ENCODE measurements at regions of chr16 and their contacts with region 1.

Region 1: GRCh38 chr16:81394966-81395651 is 49.5 kb upstream of the CMIP start:
- DNase-seq: no peak

Region 2: DNA sequence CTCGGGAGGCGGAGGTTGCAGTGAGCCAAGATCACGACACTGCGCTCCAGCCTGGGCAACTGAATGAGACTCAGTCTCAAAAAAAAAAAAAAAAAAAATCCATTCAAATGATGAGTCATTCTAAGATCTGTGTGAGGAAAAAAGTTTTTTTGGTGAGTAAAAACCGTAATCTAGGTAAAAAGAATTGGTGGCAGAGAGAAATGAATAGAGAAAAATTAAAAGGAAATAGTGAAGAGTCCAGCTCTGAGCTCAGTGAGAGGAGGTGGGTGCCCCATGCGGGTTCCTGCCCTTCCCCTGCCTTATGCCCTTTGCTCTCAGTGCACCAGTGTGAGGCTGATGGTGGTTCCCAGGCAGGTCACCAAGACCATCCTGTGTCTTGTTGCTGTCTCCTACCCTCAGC is 59.4 kb before region 1 on chr16:
- in situ Hi-C with region 1: no loop called
- DNase-seq: no peak

Region 3: GRCh38 chr16:81623363-81624102 is 228.4 kb after region 1 on chr16:
- in situ Hi-C with region 1: loop called (anchors 10 kb)
- DNase-seq: peak; percentile 49